Activated naive CD4-positive, alpha-beta T cell treated with anti-CD3 and anti-CD28 coated beads for 36 hours (primary cell): ENCODE measurements at regions of chr6 and their contacts with region 1.

Region 1: GRCh38 chr6:166627033-166627874 is at the start of gene RPS6KA2:
- DNase-seq: peak; percentile 100
- H3K4me3 Mint-ChIP-seq: peak within 1 kb of the TSS; percentile 89
- H3K27ac Mint-ChIP-seq: peak within 1 kb of the TSS; percentile 68
- H3K4me1 Mint-ChIP-seq: peaks cover 14% of the 10 kb centered on the region
- H3K27me3 Mint-ChIP-seq: peaks cover 26% of the 10 kb centered on the region
- total RNA-seq, gene RPS6KA2: 18.9 to 19.1 TPM

Region 2: DNA sequence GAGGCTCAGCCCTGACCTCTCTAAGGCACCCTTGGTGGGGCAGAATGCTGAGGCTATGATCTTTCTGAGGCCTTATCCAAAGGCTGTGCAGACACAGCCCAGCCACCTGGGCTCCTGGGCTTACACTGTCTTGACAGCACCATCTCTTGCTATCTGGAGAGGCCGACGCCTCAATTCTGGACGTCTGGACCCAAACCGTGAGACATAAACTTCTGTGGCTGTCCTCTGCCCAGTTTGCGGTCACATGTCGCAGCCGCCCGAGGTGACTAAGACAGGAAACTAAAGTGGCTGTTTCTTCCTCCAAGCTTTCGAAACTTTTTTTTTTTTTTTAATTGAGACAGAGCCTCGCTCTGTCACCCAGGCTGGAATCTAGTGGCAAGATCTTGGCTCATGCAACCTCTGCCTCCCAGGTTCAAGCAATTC is 368.4 kb before region 1 on chr6:
- CTCF ChIA-PET with region 1: no interaction called
- intact Hi-C with region 1: loop called (anchors 1 kb)
- DNase-seq: peak; percentile 57
- H3K4me3 Mint-ChIP-seq: peak overlapping the region; percentile 37
- H3K27ac Mint-ChIP-seq: peak overlapping the region; percentile 29
- H3K4me1 Mint-ChIP-seq: peaks cover 28% of the 10 kb centered on the region
- H3K27me3 Mint-ChIP-seq: peaks cover 15% of the 10 kb centered on the region

Region 3: DNA sequence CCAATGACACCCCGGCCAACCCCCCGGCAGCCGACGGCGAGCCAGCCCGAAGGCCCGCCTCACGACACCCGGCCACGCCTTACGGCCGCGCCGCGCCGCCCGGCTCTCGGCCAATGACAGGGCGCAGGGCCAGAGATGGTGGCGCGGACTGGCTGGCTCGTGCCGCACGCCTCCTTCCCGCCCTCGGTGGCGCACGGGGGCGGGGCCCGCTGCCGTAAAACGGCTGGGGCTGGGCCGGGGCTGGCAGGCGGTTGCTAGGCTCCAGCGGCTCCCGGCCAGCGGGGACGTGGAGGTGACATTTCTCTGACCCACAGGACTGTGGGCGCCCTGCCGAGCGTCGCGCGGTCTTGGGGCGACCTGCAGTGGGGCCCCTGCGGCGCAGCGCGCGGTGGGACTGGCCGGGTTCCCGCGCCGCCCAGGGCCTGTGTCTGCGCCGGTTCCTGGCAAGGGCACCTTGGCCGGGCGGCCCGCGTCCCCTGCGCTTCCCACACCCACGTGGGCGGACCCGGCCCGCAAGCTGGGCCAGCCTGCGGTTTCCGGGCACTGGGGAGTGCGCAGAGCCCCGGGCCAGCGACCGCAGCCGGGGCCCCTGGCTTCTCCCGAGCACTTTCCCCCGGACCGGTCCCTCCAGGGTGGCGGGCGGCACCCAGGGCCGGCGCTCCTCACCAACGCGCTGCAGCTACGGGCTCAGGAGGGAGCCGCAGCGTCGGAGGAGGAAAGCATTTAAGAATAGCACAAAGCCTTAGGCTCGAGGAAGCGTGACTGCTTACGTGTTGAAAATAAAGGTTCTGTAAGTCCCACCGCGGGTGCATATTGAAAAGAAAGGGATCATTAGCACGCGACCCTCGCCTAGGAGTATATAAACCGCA is 244.1 kb before region 1 on chr6 and contains the start of gene MPC1:
- CTCF ChIA-PET with region 1: no interaction called
- intact Hi-C with region 1: loop called (anchors 1 kb)
- DNase-seq: peak; percentile 94
- H3K4me3 Mint-ChIP-seq: peak within 1 kb of the TSS; percentile 85
- H3K27ac Mint-ChIP-seq: peak within 1 kb of the TSS; percentile 50
- H3K4me1 Mint-ChIP-seq: peaks cover 5% of the 10 kb centered on the region
- H3K27me3 Mint-ChIP-seq: no peaks in the 10 kb centered on the region
- total RNA-seq, gene MPC1: 16.6 to 18.7 TPM

Region 4: DNA sequence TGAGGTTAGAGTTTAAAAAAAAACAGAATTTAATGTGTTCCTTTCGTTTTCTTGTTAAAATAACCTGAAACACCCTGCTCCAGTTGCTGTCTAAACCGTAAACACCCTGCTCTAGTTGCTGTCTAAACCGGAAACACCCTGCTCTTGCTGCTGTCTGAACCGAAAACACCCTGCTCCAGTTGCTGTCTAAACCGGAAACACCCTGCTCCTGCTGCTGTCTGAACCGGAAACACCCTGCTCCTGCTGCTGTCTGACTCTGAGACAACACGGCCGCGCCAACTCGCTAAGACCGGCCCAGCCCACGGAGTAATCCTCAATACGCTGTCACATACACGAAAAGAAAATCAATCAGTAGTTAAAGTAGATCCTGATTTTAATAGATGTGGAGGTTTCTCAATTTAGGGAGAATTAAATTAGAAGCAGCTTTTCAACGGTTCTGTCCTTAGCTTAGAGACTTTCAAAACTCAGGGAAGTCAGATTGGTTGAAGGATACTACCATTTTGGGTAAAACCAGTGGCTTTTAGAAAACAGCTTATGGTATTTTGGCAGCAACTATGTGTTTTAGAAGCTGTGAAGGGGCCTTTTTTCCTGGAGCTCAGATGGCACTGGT is 139.1 kb before region 1 on chr6:
- CTCF ChIA-PET with region 1: no interaction called
- intact Hi-C with region 1: loop called (anchors 1 kb)
- DNase-seq: peak; percentile 84
- H3K4me3 Mint-ChIP-seq: peak overlapping the region; percentile 76
- H3K27ac Mint-ChIP-seq: peak overlapping the region; percentile 97
- H3K4me1 Mint-ChIP-seq: peaks cover 20% of the 10 kb centered on the region
- H3K27me3 Mint-ChIP-seq: no peaks in the 10 kb centered on the region

Region 5: GRCh38 chr6:166540631-166541331 is 86.5 kb before region 1 on chr6:
- CTCF ChIA-PET with region 1: no interaction called
- intact Hi-C with region 1: loop called (anchors 2 kb)
- DNase-seq: peak; percentile 56
- H3K4me3 Mint-ChIP-seq: peak overlapping the region; percentile 40
- H3K27ac Mint-ChIP-seq: peak overlapping the region; percentile 6
- H3K4me1 Mint-ChIP-seq: peaks cover 32% of the 10 kb centered on the region
- H3K27me3 Mint-ChIP-seq: no peaks in the 10 kb centered on the region

Region 6: DNA sequence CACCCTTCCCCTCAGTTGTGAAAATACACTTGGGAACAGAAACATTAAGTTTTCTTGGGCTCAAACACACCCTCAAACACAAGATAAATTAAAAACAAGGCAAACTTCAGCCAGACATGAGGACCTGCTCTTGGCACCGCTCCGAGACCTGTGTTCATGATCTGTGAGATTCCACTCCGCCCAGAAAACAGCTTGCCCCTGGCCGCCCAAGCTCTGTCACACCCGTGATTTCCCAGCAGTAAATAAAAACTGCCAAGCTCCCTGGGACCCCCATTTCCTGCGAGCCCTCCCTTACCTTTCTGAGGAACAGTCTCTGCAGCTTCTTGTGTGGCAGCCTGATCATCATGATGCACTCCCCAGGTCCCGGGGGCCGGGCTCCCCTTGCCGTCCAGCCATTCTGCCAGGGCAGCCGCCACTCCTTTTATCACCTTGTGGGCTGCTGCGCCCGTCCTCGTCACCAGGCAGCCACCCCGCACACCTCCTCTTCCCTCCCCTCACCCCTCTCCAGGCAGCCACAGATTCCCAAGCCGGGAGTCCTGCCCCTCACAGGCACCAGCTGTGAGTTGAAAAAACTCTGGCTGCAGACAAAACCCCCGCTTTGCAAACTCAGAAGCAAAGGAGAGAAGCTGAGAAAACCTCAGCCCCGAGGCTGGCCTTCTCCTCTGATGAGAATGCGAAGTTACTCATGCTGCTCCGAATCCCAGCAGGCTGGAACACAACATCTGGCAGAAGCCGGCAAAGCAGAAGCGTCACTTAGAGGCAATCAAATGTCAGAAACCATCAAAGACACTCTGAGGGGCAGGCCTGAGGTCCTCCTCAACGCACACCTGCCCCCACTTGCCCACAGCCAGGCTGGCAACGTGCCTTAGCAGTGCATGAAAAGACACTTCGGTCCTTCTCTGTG is 130.2 kb after region 1 on chr6:
- CTCF ChIA-PET with region 1: no interaction called
- intact Hi-C with region 1: loop called (anchors 2 kb)
- DNase-seq: peak; percentile 62
- H3K4me3 Mint-ChIP-seq: peak overlapping the region; percentile 45
- H3K27ac Mint-ChIP-seq: no peak overlapping the region
- H3K4me1 Mint-ChIP-seq: peaks cover 34% of the 10 kb centered on the region
- H3K27me3 Mint-ChIP-seq: peaks cover 7% of the 10 kb centered on the region

Region 7: DNA sequence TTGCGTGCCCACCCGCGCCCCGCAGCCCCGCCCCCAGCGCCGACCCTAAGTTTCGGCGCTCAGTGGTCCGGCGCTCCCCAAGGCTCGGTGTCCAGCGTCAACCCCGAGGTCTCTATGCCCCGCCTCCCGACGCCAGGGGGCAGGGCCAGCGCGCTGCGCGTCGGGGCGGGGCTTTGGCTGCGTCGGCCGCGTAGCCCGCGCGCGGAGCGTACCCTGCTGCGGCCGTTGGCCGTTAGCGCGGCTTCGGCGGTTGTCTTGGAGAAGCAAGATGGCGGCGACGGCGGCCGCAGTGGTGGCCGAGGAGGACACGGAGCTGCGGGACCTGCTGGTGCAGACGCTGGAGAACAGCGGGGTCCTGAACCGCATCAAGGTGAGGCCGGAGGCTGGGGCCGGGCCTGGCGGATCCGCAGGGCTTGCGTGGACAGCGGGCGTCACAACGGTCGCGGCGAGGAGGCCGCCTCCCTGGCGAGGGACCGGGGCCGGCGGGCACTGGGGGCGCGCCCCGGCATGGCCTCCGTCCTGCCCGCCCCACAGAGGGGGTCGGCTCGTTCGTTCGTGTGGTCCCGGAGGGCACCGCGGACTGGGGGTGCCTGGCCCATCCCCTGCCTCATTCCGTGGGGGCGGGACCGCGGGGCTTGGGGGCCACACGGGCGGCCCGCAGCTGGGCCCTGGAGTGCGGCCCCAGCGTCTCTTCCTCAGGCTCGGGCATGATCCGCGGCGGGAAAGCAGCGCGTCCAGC is 372.1 kb after region 1 on chr6 and contains the start of gene CEP43:
- CTCF ChIA-PET with region 1: no interaction called
- intact Hi-C with region 1: loop called (anchors 1 kb)
- DNase-seq: peak; percentile 82
- H3K4me3 Mint-ChIP-seq: peak within 1 kb of the TSS; percentile 86
- H3K27ac Mint-ChIP-seq: peak within 1 kb of the TSS; percentile 74
- H3K4me1 Mint-ChIP-seq: peaks cover 26% of the 10 kb centered on the region
- H3K27me3 Mint-ChIP-seq: no peaks in the 10 kb centered on the region
- total RNA-seq, gene CEP43: 19.6 to 20.3 TPM